ENCODE measurements at regions of chr7 and their contacts with region 1.

Region 1: GRCh38 chr7:149090397-149091195 is at the start of gene ZNF786:
- DNase-seq: peak; percentile 87 to 97 (median 92)
- ATAC-seq: peak; percentile 95
- H3K4me3 ChIP-seq: peak within 1 kb of the TSS; percentile 93
- H3K4me3 Mint-ChIP-seq: peak within 1 kb of the TSS; percentile 91 to 100 (median 99)
- H3K27ac ChIP-seq: peak within 1 kb of the TSS; percentile 85
- H3K27ac Mint-ChIP-seq: peak within 1 kb of the TSS; percentile 93 to 100 (median 99)
- H3K4me1 ChIP-seq: peaks cover 8 to 9% of the 10 kb centered on the region in 2 donors
- H3K4me1 Mint-ChIP-seq: peaks cover 18 to 40% (median 35%) of the 10 kb centered on the region in 7 donors
- H3K27me3 ChIP-seq: no peaks in the 10 kb centered on the region
- H3K27me3 Mint-ChIP-seq: no peaks in the 10 kb centered on the region
- total RNA-seq, gene ZNF786: 5.4 to 22.0 (median 10.0) TPM

Region 2: GRCh38 chr7:148575640-148576411 is 514.8 kb before region 1 on chr7:
- CTCF ChIA-PET with region 1: no interaction called
- POLR2A ChIA-PET with region 1: no interaction called
- intact Hi-C with region 1: loop called in 1 of 2 experiments (anchors 1 kb)
- DNase-seq: peak; percentile 38 to 69 (median 56)
- ATAC-seq: peak; percentile 90
- H3K4me3 ChIP-seq: no peak overlapping the region
- H3K4me3 Mint-ChIP-seq: peak overlapping the region in 1 of 10 donors; percentile 43
- H3K27ac ChIP-seq: no peak overlapping the region
- H3K27ac Mint-ChIP-seq: no peak overlapping the region
- H3K4me1 ChIP-seq: peaks cover 0 to 4% of the 10 kb centered on the region in 2 donors
- H3K4me1 Mint-ChIP-seq: peaks cover 0 to 10% (median 4%) of the 10 kb centered on the region in 7 donors
- H3K27me3 ChIP-seq: no peaks in the 10 kb centered on the region
- H3K27me3 Mint-ChIP-seq: peaks cover 0 to 17% (median 0%) of the 10 kb centered on the region in 5 donors

Region 3: GRCh38 chr7:148884299-148885022 is 206.1 kb before region 1 on chr7:
- CTCF ChIA-PET with region 1: no interaction called
- POLR2A ChIA-PET with region 1: no interaction called
- intact Hi-C with region 1: loop called (anchors 1 to 2 kb)
- DNase-seq: peak; percentile 89 to 96 (median 94)
- ATAC-seq: peak; percentile 94
- H3K4me3 ChIP-seq: peak overlapping the region; percentile 57
- H3K4me3 Mint-ChIP-seq: peak overlapping the region; percentile 85 to 98 (median 94)
- H3K27ac ChIP-seq: peak overlapping the region; percentile 97
- H3K27ac Mint-ChIP-seq: peak overlapping the region; percentile 89 to 98 (median 93)
- H3K4me1 ChIP-seq: peaks cover 6 to 7% of the 10 kb centered on the region in 2 donors
- H3K4me1 Mint-ChIP-seq: peaks cover 0 to 45% (median 29%) of the 10 kb centered on the region in 7 donors
- H3K27me3 ChIP-seq: no peaks in the 10 kb centered on the region
- H3K27me3 Mint-ChIP-seq: no peaks in the 10 kb centered on the region

Region 4: GRCh38 chr7:148987010-148987750 is 103.4 kb before region 1 on chr7:
- CTCF ChIA-PET with region 1: interaction called, 4 read pairs
- POLR2A ChIA-PET with region 1: no interaction called
- intact Hi-C with region 1: loop called (anchors 1 kb)
- DNase-seq: peak; percentile 43 to 91 (median 88)
- ATAC-seq: peak; percentile 87
- H3K4me3 ChIP-seq: peak overlapping the region; percentile 97
- H3K4me3 Mint-ChIP-seq: peak overlapping the region; percentile 92 to 99 (median 98)
- H3K27ac ChIP-seq: peak overlapping the region; percentile 85
- H3K27ac Mint-ChIP-seq: peak overlapping the region; percentile 90 to 97 (median 96)
- H3K4me1 ChIP-seq: peaks cover 26% of the 10 kb centered on the region in 2 donors
- H3K4me1 Mint-ChIP-seq: peaks cover 26 to 53% (median 48%) of the 10 kb centered on the region in 7 donors
- H3K27me3 ChIP-seq: no peaks in the 10 kb centered on the region
- H3K27me3 Mint-ChIP-seq: peaks cover 0 to 27% (median 0%) of the 10 kb centered on the region in 5 donors

Region 5: GRCh38 chr7:149209518-149210269 is 119.1 kb after region 1 on chr7:
- CTCF ChIA-PET with region 1: no interaction called
- POLR2A ChIA-PET with region 1: no interaction called
- intact Hi-C with region 1: no loop called
- DNase-seq: peak; percentile 18 to 74 (median 48)
- ATAC-seq: peak; percentile 73
- H3K4me3 ChIP-seq: no peak overlapping the region
- H3K4me3 Mint-ChIP-seq: peak overlapping the region in 1 of 10 donors; percentile 60
- H3K27ac ChIP-seq: no peak overlapping the region
- H3K27ac Mint-ChIP-seq: peak overlapping the region in 3 of 9 donors; percentile 6 to 79 (median 72)
- H3K4me1 ChIP-seq: no peaks in the 10 kb centered on the region
- H3K4me1 Mint-ChIP-seq: peaks cover 0 to 21% (median 5%) of the 10 kb centered on the region in 7 donors
- H3K27me3 ChIP-seq: no peaks in the 10 kb centered on the region
- H3K27me3 Mint-ChIP-seq: no peaks in the 10 kb centered on the region

Region 6: DNA sequence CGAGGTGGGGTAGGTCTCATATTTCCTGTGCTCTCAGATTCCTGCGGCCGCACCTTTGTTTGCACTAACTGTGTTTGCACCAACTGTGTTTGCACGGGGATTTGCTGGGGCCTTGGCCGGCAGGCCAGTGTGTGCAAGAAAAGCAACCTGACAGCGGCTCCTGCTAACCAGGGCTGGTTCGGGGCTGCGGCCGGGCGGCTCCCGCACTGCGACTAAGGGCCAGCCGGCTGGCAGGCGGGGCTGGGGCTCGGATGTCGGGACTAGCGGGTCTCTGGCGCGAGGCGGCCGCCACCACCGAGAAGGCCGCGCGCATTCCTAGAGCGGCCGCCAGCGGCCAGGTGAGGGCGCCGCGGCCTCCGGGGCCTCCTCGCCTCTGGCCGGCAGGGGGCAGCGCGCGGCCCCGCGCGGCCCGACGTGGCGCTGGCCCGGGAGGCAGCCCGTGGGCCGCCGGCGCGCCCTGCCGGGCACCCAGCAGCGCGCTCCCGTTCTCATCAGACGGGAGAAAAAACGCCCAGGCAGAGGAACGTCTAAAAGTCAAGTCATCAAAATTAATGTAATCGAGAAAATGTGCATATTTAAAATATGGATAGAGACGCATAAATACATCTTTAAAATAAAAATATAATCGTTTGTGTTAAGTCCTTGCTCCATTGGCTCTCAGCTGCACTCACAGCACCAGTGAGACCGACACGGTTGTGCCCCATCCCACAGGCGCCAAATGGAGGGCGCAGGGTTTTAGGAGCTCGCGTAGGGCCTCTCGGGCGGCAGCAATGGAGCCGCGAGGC is 331.7 kb after region 1 on chr7:
- CTCF ChIA-PET with region 1: no interaction called
- POLR2A ChIA-PET with region 1: no interaction called
- intact Hi-C with region 1: loop called in 1 of 2 experiments (anchors 1 kb)
- DNase-seq: peak; percentile 25 to 85 (median 75)
- ATAC-seq: peak; percentile 99
- H3K4me3 ChIP-seq: peak overlapping the region; percentile 75
- H3K4me3 Mint-ChIP-seq: peak overlapping the region; percentile 69 to 80 (median 76)
- H3K27ac ChIP-seq: peak overlapping the region; percentile 77
- H3K27ac Mint-ChIP-seq: peak overlapping the region in 8 of 9 donors; percentile 68 to 84 (median 81)
- H3K4me1 ChIP-seq: no peaks in the 10 kb centered on the region
- H3K4me1 Mint-ChIP-seq: peaks cover 0 to 17% (median 7%) of the 10 kb centered on the region in 7 donors
- H3K27me3 ChIP-seq: no peaks in the 10 kb centered on the region
- H3K27me3 Mint-ChIP-seq: peaks cover 0 to 14% (median 0%) of the 10 kb centered on the region in 5 donors